K562 (cell line): ENCODE measurements at regions of chr5 and their contacts with region 1.

Region 1: GRCh38 chr5:176394881-176395675 is 6.5 kb downstream of the HIGD2A start:
- DNase-seq: no peak
- ATAC-seq: no peak
- H3K4me3 ChIP-seq: no peak overlapping the region
- H3K27ac ChIP-seq: no peak overlapping the region
- H3K4me1 ChIP-seq: peaks cover 12 to 26% of the 10 kb centered on the region in 2 experiments; a peak in 4 of 5 replicates
- H3K27me3 ChIP-seq: no peaks in the 10 kb centered on the region
- CTCF ChIP-seq: no peak
- EP300 ChIP-seq: no peak
- POLR2A ChIP-seq: no peak
- RAD21 ChIP-seq: no peak

Region 2: DNA sequence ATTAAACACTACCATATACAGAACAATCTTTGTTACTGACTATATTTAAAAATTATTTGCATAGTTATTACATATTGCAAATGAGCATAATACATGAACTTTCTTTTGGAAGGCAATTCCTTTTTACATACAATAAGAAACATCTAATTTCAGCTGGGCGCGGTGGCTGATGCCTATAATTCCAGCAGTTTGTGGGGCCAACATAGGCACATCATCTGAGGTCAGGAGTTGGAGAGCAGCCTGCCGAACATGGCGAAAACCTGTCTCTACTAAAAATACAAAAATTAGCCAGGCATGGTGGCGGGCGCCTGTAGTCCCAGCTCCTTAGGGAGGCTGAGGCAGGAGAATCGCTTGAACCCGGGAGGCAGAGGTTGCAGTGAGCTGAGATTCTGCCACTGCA is 193.3 kb before region 1 on chr5:
- CTCF ChIA-PET with region 1: no interaction called
- POLR2A ChIA-PET with region 1: no interaction called
- in situ Hi-C with region 1: no loop called
- intact Hi-C with region 1: no loop called
- DNase-seq: no peak
- ATAC-seq: no peak
- H3K4me3 ChIP-seq: no peak overlapping the region
- H3K27ac ChIP-seq: no peak overlapping the region
- H3K4me1 ChIP-seq: peaks cover 3 to 26% of the 10 kb centered on the region in 2 experiments; a peak in 4 of 5 replicates
- H3K27me3 ChIP-seq: no peaks in the 10 kb centered on the region
- CTCF ChIP-seq: no peak
- EP300 ChIP-seq: no peak
- POLR2A ChIP-seq: no peak
- RAD21 ChIP-seq: no peak

Region 3: GRCh38 chr5:176405656-176406427 is 10.8 kb after region 1 on chr5:
- CTCF ChIA-PET with region 1: no interaction called
- POLR2A ChIA-PET with region 1: interaction called, 15 read pairs
- in situ Hi-C with region 1: no loop called
- intact Hi-C with region 1: no loop called
- DNase-seq: peak in 1 of 4 experiments; percentile 14
- ATAC-seq: peak; percentile 81
- H3K4me3 ChIP-seq: no peak overlapping the region
- H3K27ac ChIP-seq: no peak overlapping the region
- H3K4me1 ChIP-seq: peaks cover 0 to 7% of the 10 kb centered on the region in 2 experiments; a peak in 2 of 5 replicates
- H3K27me3 ChIP-seq: no peaks in the 10 kb centered on the region
- CTCF ChIP-seq: peak; percentile 39 to 56 (median 45)
- EP300 ChIP-seq: no peak
- POLR2A ChIP-seq: no peak
- RAD21 ChIP-seq: peak in 1 of 2 experiments; percentile 23; a peak in 2 of 4 replicates